ENCODE measurements at regions of chr5 and their contacts with region 1.

Region 1: GRCh38 chr5:39080597-39081204 is 6.5 kb upstream of the RICTOR start:
- DNase-seq: peak; percentile 40
- CTCF ChIP-seq: peak; percentile 59

Region 2: GRCh38 chr5:39005566-39006232 is 75.0 kb before region 1 on chr5:
- CTCF ChIA-PET with region 1: interaction called, 16 read pairs
- POLR2A ChIA-PET with region 1: no interaction called
- DNase-seq: no peak
- CTCF ChIP-seq: peak; percentile 18

Region 3: DNA sequence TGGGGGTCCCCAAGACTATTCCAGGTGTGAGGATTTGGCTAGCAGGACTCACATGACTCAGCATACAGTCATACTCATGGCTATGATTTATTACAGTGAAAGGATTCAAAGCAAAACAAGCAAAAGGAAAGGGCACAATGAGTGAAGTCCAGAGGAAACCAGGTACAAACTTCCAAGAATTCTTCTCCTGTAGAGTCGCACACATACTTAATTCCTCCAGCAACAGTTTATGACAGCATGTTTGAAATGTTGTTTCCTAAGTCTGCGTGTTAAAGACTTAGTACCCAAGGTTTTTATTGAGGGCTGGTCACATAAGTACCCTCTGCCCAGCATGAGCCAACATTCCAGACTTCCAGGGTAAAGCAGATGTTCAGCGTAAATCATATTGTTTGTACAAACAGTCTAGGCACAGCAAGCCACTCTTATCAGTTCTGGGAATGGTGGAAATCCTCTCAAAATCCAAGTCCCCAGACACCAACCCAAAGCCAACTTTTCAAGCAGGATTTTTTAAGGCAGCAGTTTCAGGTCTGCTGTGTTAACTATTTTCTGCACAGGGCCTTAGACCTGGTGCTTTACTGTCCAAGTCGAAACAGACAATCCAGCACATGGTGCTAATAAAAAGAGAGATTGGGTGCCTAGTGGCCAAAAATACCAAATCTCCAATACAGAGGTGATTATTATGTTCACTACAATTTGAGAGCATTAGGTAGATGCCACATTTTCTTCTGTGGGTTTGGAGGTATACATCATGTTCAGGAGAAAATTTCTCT is 12.1 kb after region 1 on chr5:
- CTCF ChIA-PET with region 1: interaction called, 23 read pairs
- POLR2A ChIA-PET with region 1: no interaction called
- DNase-seq: no peak
- CTCF ChIP-seq: no peak

Region 4: DNA sequence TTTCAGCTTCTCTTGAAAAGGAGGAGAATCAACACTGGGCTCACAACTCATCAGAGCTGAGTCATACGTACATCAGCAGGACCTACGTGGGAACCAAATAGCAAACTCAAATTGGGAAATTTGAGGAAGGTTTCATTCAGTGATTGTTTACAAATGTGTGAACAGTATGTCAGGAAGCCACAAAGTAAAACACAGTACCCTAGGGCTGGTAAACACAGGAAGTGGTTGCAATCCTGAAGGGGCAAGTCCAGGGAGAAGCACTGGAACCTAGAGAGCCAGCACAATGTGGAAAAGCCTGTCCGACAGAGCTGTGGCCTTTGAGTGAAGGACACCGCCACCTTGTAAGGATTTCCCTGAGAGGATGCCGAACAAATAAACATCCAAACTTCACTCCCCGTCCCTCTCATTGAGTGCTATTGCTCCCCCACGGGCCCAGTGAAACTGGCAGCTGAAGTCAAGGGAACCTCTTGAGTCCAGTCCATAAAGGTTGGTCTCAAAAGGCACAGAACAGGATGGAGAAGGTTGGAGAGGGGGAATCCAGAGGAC is 20.2 kb after region 1 on chr5:
- CTCF ChIA-PET with region 1: interaction called, 23 read pairs
- POLR2A ChIA-PET with region 1: no interaction called
- DNase-seq: no peak
- CTCF ChIP-seq: no peak

Region 5: GRCh38 chr5:39117401-39117800 is 36.7 kb after region 1 on chr5:
- CTCF ChIA-PET with region 1: no interaction called
- POLR2A ChIA-PET with region 1: no interaction called
- DNase-seq: no peak
- CTCF ChIP-seq: no peak

Region 6: DNA sequence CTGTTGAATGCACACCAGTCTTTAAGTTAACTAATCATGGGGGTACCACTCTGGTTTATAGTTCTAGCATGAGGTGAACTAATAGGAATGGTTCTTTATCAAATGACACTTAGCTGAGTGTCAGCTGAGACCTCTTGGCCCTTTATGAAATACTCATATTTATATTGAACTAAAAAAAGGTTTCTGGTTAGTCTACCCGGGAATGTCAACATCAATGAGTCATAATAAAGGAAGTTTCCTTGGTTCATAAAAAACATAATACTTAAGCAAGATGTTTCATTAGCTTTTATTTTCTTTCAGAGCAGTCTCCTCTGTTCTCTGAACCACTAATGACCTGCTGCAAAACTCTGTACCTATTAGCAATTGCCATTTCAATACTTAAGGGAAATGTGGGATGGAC is 330.4 kb after region 1 on chr5:
- CTCF ChIA-PET with region 1: no interaction called
- POLR2A ChIA-PET with region 1: no interaction called
- DNase-seq: no peak
- CTCF ChIP-seq: no peak